ENCODE measurements at regions of chr10 and their contacts with region 1.

Region 1: DNA sequence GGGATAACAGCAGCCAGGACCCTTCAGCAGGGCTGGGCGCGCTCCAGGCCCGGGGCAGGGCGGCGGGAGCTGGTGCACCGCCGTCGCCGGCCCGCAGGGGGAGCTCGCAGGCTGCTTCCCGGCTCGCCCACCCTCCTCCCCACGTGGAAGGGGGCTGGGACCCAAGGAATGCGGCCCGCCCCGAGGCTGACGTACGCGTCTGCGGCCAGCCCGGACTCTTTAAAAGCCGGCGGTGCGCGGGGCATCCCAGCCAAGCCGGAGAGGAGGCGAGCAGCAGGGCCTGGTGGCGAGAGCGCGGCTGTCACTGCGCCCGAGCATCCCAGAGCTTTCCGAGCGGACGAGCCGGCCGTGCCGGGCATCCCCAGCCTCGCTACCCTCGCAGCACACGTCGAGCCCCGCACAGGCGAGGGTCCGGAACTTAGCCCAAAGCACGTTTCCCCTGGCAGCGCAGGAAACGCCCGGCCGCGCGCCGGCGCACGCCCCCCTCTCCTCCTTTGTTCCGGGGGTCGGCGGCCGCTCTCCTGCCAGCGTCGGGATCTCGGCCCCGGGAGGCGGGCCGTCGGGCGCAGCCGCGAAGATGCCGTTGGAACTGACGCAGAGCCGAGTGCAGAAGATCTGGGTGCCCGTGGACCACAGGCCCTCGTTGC is at the start of gene PFKFB3:
- DNase-seq: peak; percentile 79 to 95 (median 91)
- ATAC-seq: peak; percentile 54
- H3K4me3 ChIP-seq: peak within 1 kb of the TSS; percentile 67
- H3K4me3 Mint-ChIP-seq: peak within 1 kb of the TSS; percentile 99
- H3K27ac ChIP-seq: peak within 1 kb of the TSS; percentile 22 to 56
- H3K27ac Mint-ChIP-seq: peak within 1 kb of the TSS; percentile 94
- H3K4me1 ChIP-seq: peaks cover 39% of the 10 kb centered on the region
- H3K4me1 Mint-ChIP-seq: peaks cover 42% of the 10 kb centered on the region
- H3K27me3 ChIP-seq: no peaks in the 10 kb centered on the region
- H3K27me3 Mint-ChIP-seq: no peaks in the 10 kb centered on the region
- CTCF ChIP-seq: peak; percentile 94
- total RNA-seq, gene PFKFB3: 142 to 145 TPM

Region 2: GRCh38 chr10:6108603-6109443 is 94.0 kb before region 1 on chr10:
- CTCF ChIA-PET with region 1: interaction called, 6 read pairs
- POLR2A ChIA-PET with region 1: interaction called, 5 read pairs
- intact Hi-C with region 1: loop called (anchors 1 to 2 kb)
- DNase-seq: peak in 6 of 14 experiments; percentile 17 to 83 (median 59)
- ATAC-seq: peak; percentile 86
- H3K4me3 ChIP-seq: peak overlapping the region; percentile 9
- H3K4me3 Mint-ChIP-seq: peak overlapping the region; percentile 57
- H3K27ac ChIP-seq: no peak overlapping the region
- H3K27ac Mint-ChIP-seq: peak overlapping the region; percentile 43
- H3K4me1 ChIP-seq: peaks cover 19% of the 10 kb centered on the region
- H3K4me1 Mint-ChIP-seq: peaks cover 35% of the 10 kb centered on the region
- H3K27me3 ChIP-seq: no peaks in the 10 kb centered on the region
- H3K27me3 Mint-ChIP-seq: no peaks in the 10 kb centered on the region
- CTCF ChIP-seq: peak; percentile 91

Region 3: DNA sequence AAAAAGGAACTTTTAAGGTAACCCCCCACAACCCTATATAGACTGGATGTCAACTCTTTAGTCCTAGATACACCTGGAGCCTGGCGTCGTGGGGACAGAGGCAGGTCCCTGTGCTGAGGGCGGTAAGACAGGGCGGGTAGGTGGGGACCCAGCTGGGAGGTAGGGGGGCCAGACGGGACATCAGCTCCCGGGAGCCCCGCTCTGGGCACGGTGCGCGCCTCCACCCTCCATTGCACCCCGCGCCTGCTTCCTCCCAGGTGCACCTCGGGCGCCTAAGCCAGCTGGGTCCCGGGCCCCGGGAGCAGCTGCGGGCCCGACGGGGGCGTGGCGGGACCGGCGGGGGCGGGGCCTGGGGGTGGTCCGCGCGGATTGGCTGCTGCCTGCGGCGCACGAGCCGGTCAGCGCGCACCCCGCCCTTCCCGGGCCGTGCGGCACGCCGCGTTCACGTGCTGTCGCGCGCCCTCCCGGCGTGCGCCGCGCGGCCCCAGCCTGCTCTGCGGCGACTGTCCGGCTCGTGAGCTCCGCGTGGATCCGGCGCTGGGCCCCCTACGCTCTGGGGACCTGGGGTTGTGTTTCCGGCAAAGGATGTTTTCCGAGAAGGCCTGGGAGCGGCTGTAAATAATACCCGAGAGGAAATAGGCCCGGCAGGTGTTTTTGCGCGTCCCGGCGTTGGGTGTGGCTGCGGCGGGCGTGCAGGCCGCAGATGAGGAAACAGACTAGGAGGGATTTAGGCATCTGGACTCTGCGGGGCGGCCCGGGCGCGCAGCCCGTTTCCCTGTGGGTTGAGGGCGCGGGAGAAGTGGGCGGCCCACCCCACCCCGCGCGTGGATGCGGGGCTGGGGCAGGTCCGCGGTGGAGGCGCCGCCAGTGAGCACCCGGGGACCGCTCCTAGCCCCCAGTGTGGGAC is 39.2 kb before region 1 on chr10:
- CTCF ChIA-PET with region 1: interaction called, 21 read pairs
- POLR2A ChIA-PET with region 1: interaction called, 86 read pairs
- intact Hi-C with region 1: loop called (anchors 1 to 2 kb)
- DNase-seq: peak; percentile 83 to 97 (median 92)
- ATAC-seq: peak; percentile 86
- H3K4me3 ChIP-seq: peak overlapping the region; percentile 71
- H3K4me3 Mint-ChIP-seq: peak overlapping the region; percentile 90
- H3K27ac ChIP-seq: peak overlapping the region; percentile 91 to 93
- H3K27ac Mint-ChIP-seq: peak overlapping the region; percentile 94
- H3K4me1 ChIP-seq: peaks cover 42% of the 10 kb centered on the region
- H3K4me1 Mint-ChIP-seq: peaks cover 47% of the 10 kb centered on the region
- H3K27me3 ChIP-seq: no peaks in the 10 kb centered on the region
- H3K27me3 Mint-ChIP-seq: no peaks in the 10 kb centered on the region
- CTCF ChIP-seq: no peak

Region 4: GRCh38 chr10:6275022-6275997 is 72.5 kb after region 1 on chr10:
- CTCF ChIA-PET with region 1: interaction called, 6 read pairs
- POLR2A ChIA-PET with region 1: interaction called, 4 read pairs
- intact Hi-C with region 1: loop called in 1 of 2 experiments (anchors 1 kb)
- DNase-seq: peak; percentile 63 to 97 (median 85)
- ATAC-seq: peak; percentile 89
- H3K4me3 ChIP-seq: peak overlapping the region; percentile 34
- H3K4me3 Mint-ChIP-seq: peak overlapping the region; percentile 43
- H3K27ac ChIP-seq: peak overlapping the region; percentile 15 to 73
- H3K27ac Mint-ChIP-seq: peak overlapping the region; percentile 91
- H3K4me1 ChIP-seq: peaks cover 42% of the 10 kb centered on the region
- H3K4me1 Mint-ChIP-seq: peaks cover 35% of the 10 kb centered on the region
- H3K27me3 ChIP-seq: no peaks in the 10 kb centered on the region
- H3K27me3 Mint-ChIP-seq: no peaks in the 10 kb centered on the region
- CTCF ChIP-seq: no peak

Region 5: DNA sequence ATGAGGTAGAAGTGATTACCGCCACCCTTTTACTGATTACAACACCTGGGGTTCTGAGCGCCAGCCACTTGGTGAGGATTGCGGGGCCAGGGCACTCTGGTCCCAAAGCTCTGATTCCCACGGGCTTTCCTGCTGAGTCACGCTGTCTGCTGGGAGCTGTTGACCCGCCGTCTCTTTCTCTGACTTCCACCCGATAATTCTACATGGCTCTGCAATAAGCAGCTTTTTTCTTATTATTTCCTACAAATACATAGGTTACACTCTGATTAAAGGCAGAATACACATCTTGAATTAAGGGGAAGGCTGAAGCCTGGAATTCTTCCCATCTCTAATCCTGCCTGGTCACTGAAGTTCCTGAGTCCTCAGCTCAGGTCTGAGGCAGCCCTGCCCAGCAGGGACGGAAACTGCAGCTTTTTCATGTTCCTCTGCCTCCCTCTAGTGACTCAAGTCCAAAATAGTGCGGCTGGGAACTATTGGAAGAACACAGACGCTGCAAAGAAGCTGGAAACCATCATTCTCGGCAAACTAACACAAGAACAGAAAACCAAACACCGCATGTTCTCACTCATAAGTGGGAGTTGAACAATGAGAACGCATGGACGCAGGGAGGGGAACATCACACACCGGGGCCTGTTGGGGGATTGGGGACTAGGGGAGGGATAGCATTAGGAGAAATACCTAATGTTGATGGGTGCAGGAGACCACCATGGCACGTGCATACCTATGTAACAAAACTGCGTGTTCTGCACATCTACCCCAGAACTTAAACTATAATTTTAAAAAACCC is 198.9 kb after region 1 on chr10:
- CTCF ChIA-PET with region 1: interaction called, 93 read pairs
- POLR2A ChIA-PET with region 1: interaction called, 38 read pairs
- intact Hi-C with region 1: loop called (anchors 1 to 2 kb)
- DNase-seq: peak; percentile 35 to 84 (median 49)
- ATAC-seq: peak; percentile 88
- H3K4me3 ChIP-seq: no peak overlapping the region
- H3K4me3 Mint-ChIP-seq: peak overlapping the region; percentile 30
- H3K27ac ChIP-seq: no peak overlapping the region
- H3K27ac Mint-ChIP-seq: peak overlapping the region; percentile 0
- H3K4me1 ChIP-seq: peaks cover 11% of the 10 kb centered on the region
- H3K4me1 Mint-ChIP-seq: peaks cover 29% of the 10 kb centered on the region
- H3K27me3 ChIP-seq: no peaks in the 10 kb centered on the region
- H3K27me3 Mint-ChIP-seq: no peaks in the 10 kb centered on the region
- CTCF ChIP-seq: peak; percentile 83

Region 6: GRCh38 chr10:6667679-6668270 is 465.0 kb after region 1 on chr10:
- CTCF ChIA-PET with region 1: no interaction called
- POLR2A ChIA-PET with region 1: no interaction called
- intact Hi-C with region 1: loop called in 1 of 2 experiments (anchors 5 kb)
- DNase-seq: peak in 11 of 14 experiments; percentile 7 to 61 (median 23)
- ATAC-seq: no peak
- H3K4me3 ChIP-seq: no peak overlapping the region
- H3K4me3 Mint-ChIP-seq: no peak overlapping the region
- H3K27ac ChIP-seq: no peak overlapping the region
- H3K27ac Mint-ChIP-seq: no peak overlapping the region
- H3K4me1 ChIP-seq: peaks cover 3% of the 10 kb centered on the region
- H3K4me1 Mint-ChIP-seq: peaks cover 31% of the 10 kb centered on the region
- H3K27me3 ChIP-seq: no peaks in the 10 kb centered on the region
- H3K27me3 Mint-ChIP-seq: no peaks in the 10 kb centered on the region
- CTCF ChIP-seq: peak; percentile 78